Activated CD4-positive, alpha-beta memory T cell treated with anti-CD3 and anti-CD28 coated beads, Interleukin-2, amount 10 ng/mL, durations not matched to agents 7 days and 5 days (primary cell): ENCODE measurements at regions of chr3 and their contacts with region 1.

Region 1: DNA sequence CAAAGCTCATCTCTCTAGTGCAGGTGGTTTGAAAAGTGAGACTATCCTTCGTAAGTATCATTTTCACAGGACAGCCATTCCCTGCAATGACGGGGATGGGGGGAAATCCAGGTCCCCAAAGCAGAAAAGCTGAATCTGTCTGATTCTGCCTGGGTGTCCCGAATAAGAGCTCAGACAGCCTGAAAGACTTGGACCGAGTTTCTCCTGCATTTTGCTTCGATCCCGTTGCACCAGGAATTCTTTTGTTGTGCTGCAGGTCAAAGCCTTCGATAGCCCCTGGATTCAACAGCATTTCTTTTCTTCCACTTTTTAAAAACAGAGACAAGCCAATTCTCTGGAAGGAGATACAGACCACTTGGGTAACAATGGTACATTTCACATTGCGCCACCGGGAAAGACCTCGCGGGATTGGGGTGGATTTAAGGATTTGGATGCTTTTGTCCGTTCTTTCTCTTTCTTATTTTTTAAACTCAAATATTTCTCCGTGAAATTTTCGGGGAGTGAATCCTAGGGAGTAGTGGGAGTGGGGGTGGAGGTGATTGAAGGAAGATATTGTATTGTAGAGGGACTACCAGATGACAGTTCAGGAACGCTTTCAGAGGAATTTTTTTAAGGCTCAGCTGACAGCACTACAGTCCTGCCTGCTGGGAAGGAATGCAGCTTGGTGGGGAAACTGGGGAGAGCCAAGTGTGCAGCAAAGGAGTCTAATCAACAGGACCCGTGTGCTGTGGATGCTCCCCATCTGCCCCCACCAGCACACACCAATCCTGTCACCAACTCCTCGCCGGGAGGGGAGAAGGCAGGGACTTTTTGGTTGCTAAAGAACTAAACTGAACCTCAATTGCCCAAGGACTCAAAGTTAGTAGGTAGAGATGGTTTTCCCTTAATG is 2.6 kb downstream of the SLITRK3 start:
- DNase-seq: no peak
- H3K4me3 Mint-ChIP-seq: no peak overlapping the region
- H3K27ac Mint-ChIP-seq: no peak overlapping the region
- H3K4me1 Mint-ChIP-seq: peaks cover 2% of the 10 kb centered on the region
- H3K27me3 Mint-ChIP-seq: peaks cover 47% of the 10 kb centered on the region

Region 2: DNA sequence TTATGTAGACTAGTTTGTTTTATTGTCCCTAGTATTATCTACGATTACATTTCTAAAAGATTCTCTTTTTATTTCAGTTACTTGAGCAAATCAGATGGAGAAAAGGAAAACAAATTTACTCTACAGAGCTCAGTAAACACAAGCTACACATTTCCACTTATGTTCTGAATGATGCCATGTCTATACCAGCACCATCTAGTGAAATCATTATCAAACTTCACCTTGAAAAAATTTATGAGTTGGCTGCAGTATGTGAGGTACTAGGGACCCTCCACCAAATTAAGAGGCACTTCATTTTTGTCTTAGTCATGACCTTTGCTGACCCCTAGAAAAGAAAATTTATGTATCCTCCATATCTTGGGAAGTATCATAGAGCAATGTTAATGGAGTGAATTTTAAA is 942.7 kb before region 1 on chr3:
- CTCF ChIA-PET with region 1: no interaction called
- POLR2A ChIA-PET with region 1: no interaction called
- DNase-seq: no peak
- H3K4me3 Mint-ChIP-seq: no peak overlapping the region
- H3K27ac Mint-ChIP-seq: no peak overlapping the region
- H3K4me1 Mint-ChIP-seq: no peaks in the 10 kb centered on the region
- H3K27me3 Mint-ChIP-seq: no peaks in the 10 kb centered on the region

Region 3: GRCh38 chr3:165206454-165207266 is 13.1 kb after region 1 on chr3:
- CTCF ChIA-PET with region 1: interaction called, 16 read pairs
- POLR2A ChIA-PET with region 1: no interaction called
- DNase-seq: peak; percentile 44
- H3K4me3 Mint-ChIP-seq: no peak overlapping the region
- H3K27ac Mint-ChIP-seq: no peak overlapping the region
- H3K4me1 Mint-ChIP-seq: peaks cover 2% of the 10 kb centered on the region
- H3K27me3 Mint-ChIP-seq: peaks cover 2% of the 10 kb centered on the region